Endothelial cell of umbilical vein (primary cell): ENCODE measurements at regions of chr5 and their contacts with region 1.

Region 1: DNA sequence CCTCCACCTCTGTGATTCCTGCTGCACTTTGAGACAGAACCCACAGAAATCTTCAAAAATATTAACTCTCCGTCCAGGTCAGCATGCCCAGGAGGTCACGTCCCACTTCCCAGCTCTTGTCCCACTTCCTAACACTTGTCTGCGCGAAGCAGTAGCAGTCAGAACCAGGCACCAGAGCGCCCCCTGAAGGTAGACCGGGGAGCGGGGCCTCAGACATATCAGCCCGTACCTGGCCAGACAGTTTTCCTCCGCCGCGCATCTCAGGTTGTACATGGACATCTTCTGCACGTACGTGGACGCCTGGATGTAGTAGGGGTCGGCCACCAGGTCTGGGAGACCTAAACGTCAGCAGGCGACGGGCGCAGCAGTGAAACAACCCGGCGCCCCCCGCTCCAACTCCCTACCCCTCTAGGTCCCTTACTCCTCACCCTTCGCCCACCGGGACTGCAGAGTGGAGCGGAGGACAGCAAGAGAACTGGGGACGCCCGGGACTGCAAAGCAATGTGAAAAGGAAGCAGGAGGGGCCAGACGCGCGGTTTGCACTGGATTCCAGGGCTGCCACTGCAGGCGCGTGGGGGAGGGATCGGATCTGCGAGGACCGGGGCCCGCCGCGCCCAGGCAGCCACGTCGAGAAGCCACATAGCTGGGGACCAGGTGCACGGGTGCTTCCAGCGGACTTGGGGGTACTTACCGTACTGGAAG is 1.2 kb downstream of the LOX start:
- DNase-seq: peak; percentile 88
- H3K4me3 ChIP-seq: peak overlapping the region; percentile 51 to 68 (median 67)
- H3K27ac ChIP-seq: peak overlapping the region; percentile 88
- H3K4me1 ChIP-seq: peaks cover 40% of the 10 kb centered on the region
- H3K27me3 ChIP-seq: no peaks in the 10 kb centered on the region
- CTCF ChIP-seq: peak; percentile 85 to 93
- POLR2A ChIP-seq: no peak

Region 2: DNA sequence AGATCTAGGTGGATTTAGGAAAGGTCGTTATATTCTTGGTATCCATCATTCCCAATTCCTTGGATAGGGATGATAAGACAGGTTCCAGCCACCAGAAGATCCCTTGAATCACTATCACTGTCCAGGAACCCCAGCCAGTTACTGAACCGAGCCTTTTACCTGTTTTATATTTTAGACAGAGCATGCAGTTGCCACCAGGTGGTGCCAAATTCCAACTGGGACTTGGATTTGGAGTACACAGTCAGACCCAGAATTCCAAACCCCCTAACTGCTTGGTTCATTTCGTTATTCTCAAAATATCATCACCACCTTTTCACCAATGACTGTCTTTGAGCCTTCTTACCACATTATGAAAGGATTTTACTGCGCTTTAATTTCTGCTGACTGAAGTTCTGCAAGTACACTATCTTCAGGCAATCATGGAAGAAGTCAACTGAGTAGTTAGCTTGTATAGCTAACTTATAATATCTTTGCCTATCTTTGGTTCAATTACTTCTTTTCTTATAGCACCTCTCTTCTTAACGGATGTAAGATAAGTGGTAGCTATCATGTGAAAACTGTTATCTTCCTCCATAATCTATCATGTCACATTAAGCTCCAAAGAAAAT is 1420.9 kb before region 1 on chr5:
- CTCF ChIA-PET with region 1: no interaction called
- POLR2A ChIA-PET with region 1: no interaction called
- dilution Hi-C with region 1: no loop called
- intact Hi-C with region 1: loop called (anchors 10 kb)
- DNase-seq: peak; percentile 19
- H3K4me3 ChIP-seq: no peak overlapping the region
- H3K27ac ChIP-seq: no peak overlapping the region
- H3K4me1 ChIP-seq: no peaks in the 10 kb centered on the region
- H3K27me3 ChIP-seq: no peaks in the 10 kb centered on the region
- CTCF ChIP-seq: peak; percentile 36 to 57
- POLR2A ChIP-seq: no peak

Region 3: GRCh38 chr5:121873409-121873808 is 203.4 kb before region 1 on chr5:
- CTCF ChIA-PET with region 1: no interaction called
- POLR2A ChIA-PET with region 1: no interaction called
- dilution Hi-C with region 1: no loop called
- intact Hi-C with region 1: no loop called
- DNase-seq: no peak
- H3K4me3 ChIP-seq: no peak overlapping the region
- H3K27ac ChIP-seq: no peak overlapping the region
- H3K4me1 ChIP-seq: no peaks in the 10 kb centered on the region
- H3K27me3 ChIP-seq: no peaks in the 10 kb centered on the region
- CTCF ChIP-seq: no peak
- POLR2A ChIP-seq: no peak

Region 4: GRCh38 chr5:121962347-121962670 is 114.5 kb before region 1 on chr5:
- CTCF ChIA-PET with region 1: interaction called, 73 read pairs
- POLR2A ChIA-PET with region 1: interaction called, 3 read pairs
- dilution Hi-C with region 1: no loop called
- intact Hi-C with region 1: loop called (anchors 1 kb)
- DNase-seq: peak; percentile 42
- H3K4me3 ChIP-seq: peak overlapping the region; percentile 79 to 95 (median 88)
- H3K27ac ChIP-seq: peak overlapping the region; percentile 86
- H3K4me1 ChIP-seq: peaks cover 14% of the 10 kb centered on the region
- H3K27me3 ChIP-seq: peaks cover 4 to 5% of the 10 kb centered on the region in 2 experiments
- CTCF ChIP-seq: no peak
- POLR2A ChIP-seq: no peak

Region 5: DNA sequence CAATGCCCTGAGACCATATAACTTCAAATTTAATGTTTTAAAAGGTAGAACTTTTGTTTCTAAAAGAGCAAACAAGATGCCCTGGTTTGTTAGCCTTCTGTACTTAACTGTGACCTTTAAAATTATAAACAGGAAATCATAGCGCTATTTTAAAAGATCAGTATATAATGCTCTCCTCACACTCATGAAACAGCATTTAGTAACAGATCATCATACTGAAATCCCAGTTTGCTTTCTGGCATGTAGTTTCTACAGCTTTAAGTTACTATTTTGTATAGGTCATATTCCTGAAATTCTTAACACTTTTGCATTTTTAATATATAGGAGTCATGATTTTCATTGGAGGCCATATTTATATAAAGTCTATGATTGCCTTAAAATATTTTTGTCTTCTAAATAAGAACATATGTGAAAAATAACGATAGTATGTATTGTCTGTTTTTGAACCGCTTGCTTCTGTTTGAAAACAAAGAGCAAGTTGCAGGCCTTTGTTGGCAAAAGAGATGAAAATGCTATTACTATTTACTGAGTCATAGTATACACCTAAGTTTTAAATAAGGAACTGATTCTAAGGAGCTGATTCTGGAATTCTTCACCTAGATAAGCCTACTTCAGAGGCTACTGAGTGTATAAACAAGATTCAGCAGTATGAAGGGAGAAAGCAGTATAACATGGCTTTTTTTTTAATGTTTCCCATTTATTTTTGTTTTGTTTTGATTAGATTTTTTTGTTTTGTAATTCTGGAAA is 94.5 kb before region 1 on chr5:
- CTCF ChIA-PET with region 1: interaction called, 29 read pairs
- POLR2A ChIA-PET with region 1: no interaction called
- dilution Hi-C with region 1: no loop called
- intact Hi-C with region 1: no loop called
- DNase-seq: peak; percentile 42
- H3K4me3 ChIP-seq: no peak overlapping the region
- H3K27ac ChIP-seq: peak overlapping the region; percentile 16
- H3K4me1 ChIP-seq: peaks cover 18% of the 10 kb centered on the region
- H3K27me3 ChIP-seq: no peaks in the 10 kb centered on the region
- CTCF ChIP-seq: no peak
- POLR2A ChIP-seq: no peak

Region 6: GRCh38 chr5:122053181-122054109 is 23.4 kb before region 1 on chr5:
- CTCF ChIA-PET with region 1: interaction called, 25 read pairs
- POLR2A ChIA-PET with region 1: no interaction called
- dilution Hi-C with region 1: no loop called
- intact Hi-C with region 1: no loop called
- DNase-seq: peak; percentile 40
- H3K4me3 ChIP-seq: no peak overlapping the region
- H3K27ac ChIP-seq: no peak overlapping the region
- H3K4me1 ChIP-seq: no peaks in the 10 kb centered on the region
- H3K27me3 ChIP-seq: no peaks in the 10 kb centered on the region
- CTCF ChIP-seq: no peak
- POLR2A ChIP-seq: no peak

Region 7: DNA sequence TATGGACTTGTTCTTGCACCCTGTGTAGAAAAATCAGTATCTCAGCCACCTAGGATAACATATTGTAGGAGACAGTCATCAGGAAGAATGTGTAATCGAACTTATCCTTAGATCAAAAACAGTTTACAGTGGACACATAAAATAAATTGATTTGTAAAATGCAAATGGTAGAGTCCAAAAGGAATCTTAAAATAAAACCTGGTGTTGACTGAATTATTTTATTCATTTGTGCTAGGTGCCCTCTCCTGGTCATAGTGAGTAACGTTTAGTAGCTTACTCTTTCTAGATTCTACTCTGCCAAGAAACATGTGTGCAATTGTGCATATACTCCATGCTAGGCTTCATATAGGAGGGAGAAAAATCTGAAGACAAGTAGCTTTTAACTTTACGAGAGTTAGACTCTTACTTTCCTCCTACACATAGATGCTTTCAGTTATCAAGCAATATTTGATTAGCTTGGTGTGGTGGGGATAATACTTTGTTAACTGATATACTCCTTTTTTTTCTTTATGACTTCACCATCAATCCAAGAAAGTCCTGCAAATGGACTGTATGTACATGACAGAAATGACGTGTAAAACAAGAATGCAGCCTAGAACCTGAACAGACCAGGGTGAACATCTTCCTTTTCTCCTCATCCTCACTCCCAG is 24.9 kb after region 1 on chr5:
- CTCF ChIA-PET with region 1: interaction called, 55 read pairs
- POLR2A ChIA-PET with region 1: no interaction called
- dilution Hi-C with region 1: no loop called
- intact Hi-C with region 1: loop called (anchors 1 kb)
- DNase-seq: peak; percentile 64
- H3K4me3 ChIP-seq: no peak overlapping the region
- H3K27ac ChIP-seq: no peak overlapping the region
- H3K4me1 ChIP-seq: peaks cover 8% of the 10 kb centered on the region
- H3K27me3 ChIP-seq: no peaks in the 10 kb centered on the region
- CTCF ChIP-seq: peak; percentile 26 to 49
- POLR2A ChIP-seq: no peak

Region 8: DNA sequence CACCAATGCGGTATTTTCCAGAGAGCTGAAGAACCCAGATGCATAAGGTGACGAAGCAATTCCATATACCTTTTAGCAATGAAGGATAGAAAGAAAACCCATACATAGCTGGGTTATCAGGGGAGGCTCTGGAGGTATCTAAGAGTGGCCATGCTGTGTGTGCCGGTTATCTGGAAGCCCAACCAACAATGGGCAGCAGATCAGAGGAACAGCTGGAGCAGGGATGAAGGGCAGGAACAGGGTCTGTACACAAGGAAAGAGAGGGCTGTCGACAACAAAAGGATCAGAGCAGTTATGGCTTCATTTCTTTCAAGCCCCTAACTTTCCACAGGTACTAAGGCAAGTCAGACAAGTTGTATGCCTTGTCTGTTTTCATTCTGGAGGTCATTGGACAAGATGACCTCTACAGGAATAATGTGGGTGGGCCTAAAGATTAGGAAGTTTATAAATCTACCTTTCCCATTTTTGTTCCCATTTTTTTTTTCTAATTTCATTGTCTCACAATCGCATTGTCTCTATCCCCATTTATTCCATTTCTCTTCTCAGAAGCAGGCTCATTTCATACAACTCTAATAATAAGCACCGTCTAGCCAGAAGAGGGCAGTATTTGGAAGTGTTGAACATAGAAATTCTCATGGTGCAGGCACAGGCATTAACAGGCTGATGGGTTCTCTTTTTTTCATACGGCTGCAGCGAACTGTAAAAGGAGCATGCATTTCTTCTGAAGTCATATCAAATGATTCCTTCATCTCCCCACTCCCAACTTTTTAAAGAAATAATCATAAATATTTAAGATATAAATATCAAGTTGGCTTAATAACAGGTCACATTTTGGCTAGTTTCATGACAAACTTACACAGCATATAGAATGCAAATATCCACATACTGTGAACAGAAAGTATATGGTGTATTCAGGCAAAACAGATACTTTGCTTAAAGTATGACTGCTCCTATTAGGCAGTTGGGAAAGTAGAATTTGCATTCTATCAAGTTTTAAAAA is 116.0 kb after region 1 on chr5:
- CTCF ChIA-PET with region 1: interaction called, 6 read pairs
- POLR2A ChIA-PET with region 1: no interaction called
- dilution Hi-C with region 1: loop called (anchors 25 kb)
- intact Hi-C with region 1: no loop called
- DNase-seq: peak; percentile 76
- H3K4me3 ChIP-seq: no peak overlapping the region
- H3K27ac ChIP-seq: no peak overlapping the region
- H3K4me1 ChIP-seq: peaks cover 6% of the 10 kb centered on the region
- H3K27me3 ChIP-seq: peaks cover under 1 to 3% of the 10 kb centered on the region in 2 experiments
- CTCF ChIP-seq: peak; percentile 51 to 58
- POLR2A ChIP-seq: no peak

Region 9: DNA sequence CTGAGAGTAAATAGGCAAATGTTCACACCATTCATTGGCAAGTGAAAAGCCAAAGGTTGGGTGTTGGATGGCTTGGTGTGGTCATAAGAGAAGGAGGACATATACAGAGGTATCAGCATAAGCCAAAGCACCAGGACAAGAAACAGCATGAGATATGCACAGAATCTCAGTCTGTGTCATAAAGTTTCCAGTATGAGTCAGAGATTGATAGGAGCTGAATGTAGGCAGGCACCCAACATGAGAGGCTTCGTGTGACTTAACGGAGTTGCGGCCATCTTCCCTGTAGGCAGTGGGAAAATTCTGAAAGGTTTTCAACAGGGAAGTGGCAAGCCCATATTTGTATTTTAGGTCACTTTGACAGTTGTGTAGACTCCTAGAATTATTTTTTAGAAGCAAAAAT is 289.7 kb after region 1 on chr5:
- CTCF ChIA-PET with region 1: no interaction called
- POLR2A ChIA-PET with region 1: no interaction called
- dilution Hi-C with region 1: no loop called
- intact Hi-C with region 1: no loop called
- DNase-seq: no peak
- H3K4me3 ChIP-seq: no peak overlapping the region
- H3K27ac ChIP-seq: no peak overlapping the region
- H3K4me1 ChIP-seq: no peaks in the 10 kb centered on the region
- H3K27me3 ChIP-seq: no peaks in the 10 kb centered on the region
- CTCF ChIP-seq: no peak
- POLR2A ChIP-seq: no peak